RWPE1 (cell line): ENCODE measurements at regions of chr1 and their contacts with region 1.

Region 1: DNA sequence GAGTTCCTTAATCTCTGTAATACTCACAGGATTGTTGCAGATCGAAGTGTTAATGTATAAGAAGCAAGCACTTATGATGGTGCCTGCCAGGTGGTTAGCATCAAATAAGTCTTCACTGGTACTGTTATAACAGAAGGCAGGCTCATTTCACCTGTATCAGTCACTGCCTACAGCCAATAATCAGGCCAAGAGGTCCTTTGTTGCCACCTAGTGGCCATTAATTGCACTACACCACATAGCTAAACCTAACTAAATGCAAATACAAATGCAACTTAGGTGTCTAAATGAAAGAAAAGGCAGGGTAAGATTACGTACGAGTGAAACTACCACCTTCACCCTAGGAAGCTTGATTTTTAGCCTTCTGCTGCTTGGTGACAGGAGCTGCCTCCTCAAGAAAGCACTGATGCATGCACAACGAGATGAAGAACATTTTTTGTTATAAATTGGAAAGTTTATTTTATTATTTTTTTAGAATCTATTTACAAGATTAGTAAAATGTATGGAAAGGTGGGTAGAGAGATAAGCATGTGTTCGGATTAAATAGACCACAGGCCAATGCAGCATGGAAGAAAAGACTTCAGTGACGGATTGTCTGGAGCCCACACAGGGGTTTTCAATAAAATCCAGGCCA is 334.8 kb upstream of the CAMK1G start:
- DNase-seq: peak; percentile 78
- H3K27ac ChIP-seq: no peak overlapping the region
- CTCF ChIP-seq: peak; percentile 92

Region 2: DNA sequence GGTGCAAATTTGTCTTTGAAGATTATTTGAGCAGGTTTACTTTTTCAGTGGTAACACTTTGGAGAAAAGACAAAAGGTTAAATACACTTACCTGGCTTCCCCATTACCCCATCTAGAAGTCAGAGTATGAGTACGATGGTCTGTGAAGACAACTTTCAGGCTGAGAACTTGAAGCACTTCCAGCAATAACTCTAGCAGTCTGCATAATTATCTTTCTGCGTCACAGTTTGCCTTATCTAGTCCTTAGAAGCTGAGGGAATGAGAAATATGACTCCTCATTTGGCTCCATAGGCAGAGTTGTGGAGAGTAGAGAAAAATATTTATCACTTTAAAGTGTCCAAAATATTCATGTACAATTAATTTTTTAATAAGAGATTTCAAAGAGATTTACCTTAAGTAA is 11.4 kb after region 1 on chr1:
- CTCF ChIA-PET with region 1: interaction called, 11 read pairs
- POLR2A ChIA-PET with region 1: no interaction called
- DNase-seq: no peak
- H3K27ac ChIP-seq: no peak overlapping the region
- CTCF ChIP-seq: no peak